ENCODE measurements at regions of chr7 and their contacts with region 1.

Region 1: GRCh38 chr7:123865517-123866117 is 20.6 kb downstream of the HYAL4 start:
- DNase-seq: peak; percentile 54
- H3K4me3 ChIP-seq: no peak overlapping the region
- H3K27ac ChIP-seq: no peak overlapping the region
- H3K4me1 ChIP-seq: no peaks in the 10 kb centered on the region
- H3K27me3 ChIP-seq: no peaks in the 10 kb centered on the region
- CTCF ChIP-seq: peak; percentile 46 to 81 (median 78)
- POLR2A ChIP-seq: no peak

Region 2: GRCh38 chr7:123635551-123636359 is 229.9 kb before region 1 on chr7:
- intact Hi-C with region 1: loop called (anchors 5 kb)
- DNase-seq: no peak
- H3K4me3 ChIP-seq: no peak overlapping the region
- H3K27ac ChIP-seq: no peak overlapping the region
- H3K4me1 ChIP-seq: peaks cover 3% of the 10 kb centered on the region
- H3K27me3 ChIP-seq: no peaks in the 10 kb centered on the region
- CTCF ChIP-seq: peak in 2 of 4 experiments; percentile 21 to 48
- POLR2A ChIP-seq: no peak

Region 3: GRCh38 chr7:123682690-123683089 is 182.9 kb before region 1 on chr7:
- intact Hi-C with region 1: loop called (anchors 5 kb)
- DNase-seq: peak; percentile 21
- H3K4me3 ChIP-seq: no peak overlapping the region
- H3K27ac ChIP-seq: no peak overlapping the region
- H3K4me1 ChIP-seq: no peaks in the 10 kb centered on the region
- H3K27me3 ChIP-seq: no peaks in the 10 kb centered on the region
- CTCF ChIP-seq: peak in 3 of 4 experiments; percentile 26 to 64 (median 59)
- POLR2A ChIP-seq: no peak

Region 4: GRCh38 chr7:123836656-123837055 is 29.0 kb before region 1 on chr7:
- intact Hi-C with region 1: no loop called
- DNase-seq: no peak
- H3K4me3 ChIP-seq: no peak overlapping the region
- H3K27ac ChIP-seq: no peak overlapping the region
- H3K4me1 ChIP-seq: no peaks in the 10 kb centered on the region
- H3K27me3 ChIP-seq: no peaks in the 10 kb centered on the region
- CTCF ChIP-seq: no peak
- POLR2A ChIP-seq: no peak

Measured in prostate gland (tissue), 2 donors.